ENCODE measurements at regions of chr10 and their contacts with region 1.

Region 1: DNA sequence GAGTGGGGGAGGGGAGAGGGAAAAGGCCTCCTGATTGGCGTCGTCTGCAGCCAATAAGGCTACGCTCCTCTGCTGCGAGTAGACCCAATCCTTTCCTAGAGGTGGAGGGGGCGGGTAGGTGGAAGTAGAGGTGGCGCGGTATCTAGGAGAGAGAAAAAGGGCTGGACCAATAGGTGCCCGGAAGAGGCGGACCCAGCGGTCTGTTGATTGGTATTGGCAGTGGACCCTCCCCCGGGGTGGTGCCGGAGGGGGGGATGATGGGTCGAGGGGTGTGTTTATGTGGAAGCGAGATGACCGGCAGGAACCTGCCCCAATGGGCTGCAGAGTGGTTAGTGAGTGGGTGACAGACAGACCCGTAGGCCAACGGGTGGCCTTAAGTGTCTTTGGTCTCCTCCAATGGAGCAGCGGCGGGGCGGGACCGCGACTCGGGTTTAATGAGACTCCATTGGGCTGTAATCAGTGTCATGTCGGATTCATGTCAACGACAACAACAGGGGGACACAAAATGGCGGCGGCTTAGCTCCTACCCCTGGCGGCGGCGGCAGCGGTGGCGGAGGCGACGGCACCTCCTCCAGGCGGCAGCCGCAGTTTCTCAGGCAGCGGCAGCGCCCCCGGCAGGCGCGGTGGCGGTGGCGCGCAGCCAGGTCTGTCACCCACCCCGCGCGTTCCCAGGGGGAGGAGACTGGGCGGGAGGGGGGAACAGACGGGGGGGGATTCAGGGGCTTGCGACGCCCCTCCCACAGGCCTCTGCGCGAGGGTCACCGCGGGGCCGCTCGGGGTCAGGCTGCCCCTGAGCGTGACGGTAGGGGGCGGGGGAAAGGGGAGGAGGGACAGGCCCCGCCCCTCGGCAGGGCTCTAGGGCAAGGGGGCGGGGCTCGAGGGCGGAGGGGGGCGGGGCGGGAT is at the start of gene KAT6B:
- DNase-seq: peak; percentile 98
- ATAC-seq: peak; percentile 81
- H3K4me3 Mint-ChIP-seq: peak within 1 kb of the TSS; percentile 88
- H3K27ac Mint-ChIP-seq: peak within 1 kb of the TSS; percentile 96
- H3K4me1 Mint-ChIP-seq: peaks cover 44% of the 10 kb centered on the region
- H3K27me3 Mint-ChIP-seq: no peaks in the 10 kb centered on the region
- CTCF ChIP-seq: no peak
- total RNA-seq, gene KAT6B: 39.6 and 45.2 TPM in 2 replicates

Region 2: GRCh38 chr10:73625884-73626752 is 1200.3 kb before region 1 on chr10:
- CTCF ChIA-PET with region 1: no interaction called
- POLR2A ChIA-PET with region 1: no interaction called
- intact Hi-C with region 1: loop called (anchors 5 kb)
- DNase-seq: peak; percentile 78
- ATAC-seq: peak; percentile 94
- H3K4me3 Mint-ChIP-seq: peak overlapping the region; percentile 99
- H3K27ac Mint-ChIP-seq: peak overlapping the region; percentile 98
- H3K4me1 Mint-ChIP-seq: peaks cover 24% of the 10 kb centered on the region
- H3K27me3 Mint-ChIP-seq: no peaks in the 10 kb centered on the region
- CTCF ChIP-seq: no peak

Region 3: DNA sequence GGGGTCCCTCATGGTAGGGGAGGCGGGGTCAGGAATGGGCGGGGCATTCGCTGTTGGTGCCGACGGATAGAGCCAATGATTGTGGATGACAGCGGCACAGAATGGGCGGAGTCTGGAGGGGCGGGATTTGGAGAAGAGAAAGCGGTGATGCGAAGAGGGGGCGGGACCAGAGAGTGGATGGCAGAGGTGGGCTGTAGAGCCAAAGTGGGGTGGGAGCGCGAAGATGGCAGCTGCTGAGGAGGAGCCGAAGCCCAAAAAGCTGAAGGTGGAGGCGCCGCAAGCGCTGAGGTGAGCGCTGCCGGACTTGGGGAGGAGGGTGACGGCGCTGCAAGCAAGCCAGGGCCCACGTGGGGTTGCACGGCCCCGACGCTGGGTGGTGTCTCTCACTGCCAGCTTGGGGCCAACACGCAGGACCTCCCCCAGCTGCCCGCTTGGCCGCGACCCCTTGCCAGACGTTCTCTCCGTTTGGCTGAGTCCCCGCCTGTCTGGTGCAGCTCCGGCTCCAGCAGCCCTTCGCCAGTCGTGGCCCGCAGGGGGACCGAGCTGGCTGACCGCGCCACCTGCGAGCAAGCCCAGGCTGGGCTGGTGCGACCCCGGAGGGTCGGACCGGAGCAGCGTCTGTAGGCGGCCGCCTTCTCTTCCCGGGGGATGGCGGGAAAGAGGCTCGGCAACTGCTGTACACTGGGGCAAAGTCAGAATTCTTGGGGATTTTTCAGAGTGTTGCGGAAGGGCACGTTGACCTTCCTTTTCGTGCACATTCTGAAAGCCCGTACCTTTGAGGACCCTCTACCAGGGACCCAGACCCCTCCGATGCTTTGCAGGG is 675.1 kb before region 1 on chr10 and contains the start of gene ADK:
- CTCF ChIA-PET with region 1: no interaction called
- POLR2A ChIA-PET with region 1: interaction called, 3 read pairs
- intact Hi-C with region 1: loop called (anchors 1 kb)
- DNase-seq: peak; percentile 99
- ATAC-seq: peak; percentile 96
- H3K4me3 Mint-ChIP-seq: no peak within 1 kb of the TSS
- H3K27ac Mint-ChIP-seq: no peak within 1 kb of the TSS
- H3K4me1 Mint-ChIP-seq: peaks cover 61% of the 10 kb centered on the region
- H3K27me3 Mint-ChIP-seq: no peaks in the 10 kb centered on the region
- CTCF ChIP-seq: no peak
- total RNA-seq, gene ADK: 46.1 and 47.5 TPM in 2 replicates

Region 4: DNA sequence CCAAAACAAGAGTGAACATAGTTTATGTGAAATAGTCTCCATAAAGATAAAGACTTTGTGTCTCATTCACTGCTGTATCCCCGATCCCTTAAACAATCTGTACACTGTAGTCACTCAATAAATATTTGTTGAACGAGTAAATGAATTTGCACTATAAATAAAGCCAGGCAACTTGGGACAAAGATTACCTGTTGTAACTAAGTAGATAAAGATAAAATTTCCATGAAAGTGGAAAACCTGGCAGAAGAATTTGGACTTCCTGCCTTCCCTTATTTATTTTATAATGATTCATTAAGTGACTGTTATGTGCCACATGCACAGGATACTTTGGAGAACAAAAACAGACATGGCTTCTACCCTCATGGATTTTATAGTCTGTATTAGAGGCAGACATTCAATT is 277.7 kb before region 1 on chr10:
- CTCF ChIA-PET with region 1: no interaction called
- POLR2A ChIA-PET with region 1: no interaction called
- intact Hi-C with region 1: no loop called
- DNase-seq: no peak
- ATAC-seq: no peak
- H3K4me3 Mint-ChIP-seq: no peak overlapping the region
- H3K27ac Mint-ChIP-seq: no peak overlapping the region
- H3K4me1 Mint-ChIP-seq: no peaks in the 10 kb centered on the region
- H3K27me3 Mint-ChIP-seq: no peaks in the 10 kb centered on the region
- CTCF ChIP-seq: no peak

Region 5: GRCh38 chr10:74589226-74589673 is 237.1 kb before region 1 on chr10:
- CTCF ChIA-PET with region 1: no interaction called
- POLR2A ChIA-PET with region 1: interaction called, 3 read pairs
- intact Hi-C with region 1: loop called (anchors 1 kb)
- DNase-seq: peak; percentile 24
- ATAC-seq: peak; percentile 70
- H3K4me3 Mint-ChIP-seq: no peak overlapping the region
- H3K27ac Mint-ChIP-seq: peak overlapping the region; percentile 53
- H3K4me1 Mint-ChIP-seq: peaks cover 50% of the 10 kb centered on the region
- H3K27me3 Mint-ChIP-seq: no peaks in the 10 kb centered on the region
- CTCF ChIP-seq: no peak

Region 6: GRCh38 chr10:74786088-74786487 is 40.3 kb before region 1 on chr10:
- CTCF ChIA-PET with region 1: no interaction called
- POLR2A ChIA-PET with region 1: no interaction called
- intact Hi-C with region 1: no loop called
- DNase-seq: no peak
- ATAC-seq: no peak
- H3K4me3 Mint-ChIP-seq: no peak overlapping the region
- H3K27ac Mint-ChIP-seq: no peak overlapping the region
- H3K4me1 Mint-ChIP-seq: no peaks in the 10 kb centered on the region
- H3K27me3 Mint-ChIP-seq: no peaks in the 10 kb centered on the region
- CTCF ChIP-seq: no peak

Region 7: GRCh38 chr10:74855027-74855426 is 28.6 kb after region 1 on chr10:
- CTCF ChIA-PET with region 1: no interaction called
- POLR2A ChIA-PET with region 1: interaction called, 72 read pairs
- intact Hi-C with region 1: loop called (anchors 1 kb)
- DNase-seq: no peak
- ATAC-seq: peak; percentile 55
- H3K4me3 Mint-ChIP-seq: peak overlapping the region; percentile 45
- H3K27ac Mint-ChIP-seq: peak overlapping the region; percentile 85
- H3K4me1 Mint-ChIP-seq: peaks cover 46% of the 10 kb centered on the region
- H3K27me3 Mint-ChIP-seq: no peaks in the 10 kb centered on the region
- CTCF ChIP-seq: no peak

Region 8: DNA sequence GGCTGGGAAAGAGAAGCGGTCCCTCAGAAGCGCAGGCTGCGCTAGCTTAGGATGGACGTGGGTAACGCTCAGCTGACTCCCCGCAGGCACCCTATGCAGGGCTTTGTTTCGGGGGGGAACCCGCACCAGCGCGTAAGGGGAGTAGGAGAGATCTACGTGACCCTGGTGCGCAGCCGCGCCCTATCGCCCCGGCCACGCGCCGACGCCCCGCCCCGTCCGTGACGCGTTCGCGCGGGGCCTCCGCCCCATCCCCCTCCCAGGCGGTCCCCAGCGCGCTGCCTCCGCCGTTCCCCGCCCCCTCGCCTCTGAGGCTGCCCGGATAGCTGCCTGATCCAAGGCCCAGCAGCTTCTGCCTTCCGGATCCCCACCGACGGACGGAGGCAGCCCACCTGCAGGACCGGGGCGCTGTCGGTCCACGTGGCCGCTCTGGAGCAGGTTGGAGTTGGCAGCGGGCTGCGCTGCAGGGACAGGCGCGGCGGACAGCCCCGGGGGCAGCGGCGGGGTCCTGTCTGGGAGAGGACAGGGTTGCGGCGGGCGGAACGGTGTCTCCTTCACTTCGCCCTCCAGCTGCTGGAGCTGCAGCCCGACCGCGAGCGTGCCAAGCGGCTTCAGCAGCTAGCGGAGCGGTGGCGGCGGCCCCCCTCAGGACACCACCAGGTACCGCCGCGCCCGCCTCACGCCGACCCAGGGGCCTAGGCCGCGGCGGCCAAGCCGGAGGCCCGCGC is 384.1 kb after region 1 on chr10 and contains the start of gene VDAC2:
- CTCF ChIA-PET with region 1: no interaction called
- POLR2A ChIA-PET with region 1: interaction called, 3 read pairs
- intact Hi-C with region 1: loop called (anchors 1 kb)
- DNase-seq: peak; percentile 98
- ATAC-seq: peak; percentile 89
- H3K4me3 Mint-ChIP-seq: peak within 1 kb of the TSS; percentile 99
- H3K27ac Mint-ChIP-seq: peak within 1 kb of the TSS; percentile 100
- H3K4me1 Mint-ChIP-seq: peaks cover 27% of the 10 kb centered on the region
- H3K27me3 Mint-ChIP-seq: no peaks in the 10 kb centered on the region
- CTCF ChIP-seq: no peak
- total RNA-seq, gene VDAC2: 99.0 and 104 TPM in 2 replicates